Activated B cell treated with CpG ODN at 0.5 μM for 24 hours (primary cell): ENCODE measurements at regions of chr14 and their contacts with region 1.

Region 1: DNA sequence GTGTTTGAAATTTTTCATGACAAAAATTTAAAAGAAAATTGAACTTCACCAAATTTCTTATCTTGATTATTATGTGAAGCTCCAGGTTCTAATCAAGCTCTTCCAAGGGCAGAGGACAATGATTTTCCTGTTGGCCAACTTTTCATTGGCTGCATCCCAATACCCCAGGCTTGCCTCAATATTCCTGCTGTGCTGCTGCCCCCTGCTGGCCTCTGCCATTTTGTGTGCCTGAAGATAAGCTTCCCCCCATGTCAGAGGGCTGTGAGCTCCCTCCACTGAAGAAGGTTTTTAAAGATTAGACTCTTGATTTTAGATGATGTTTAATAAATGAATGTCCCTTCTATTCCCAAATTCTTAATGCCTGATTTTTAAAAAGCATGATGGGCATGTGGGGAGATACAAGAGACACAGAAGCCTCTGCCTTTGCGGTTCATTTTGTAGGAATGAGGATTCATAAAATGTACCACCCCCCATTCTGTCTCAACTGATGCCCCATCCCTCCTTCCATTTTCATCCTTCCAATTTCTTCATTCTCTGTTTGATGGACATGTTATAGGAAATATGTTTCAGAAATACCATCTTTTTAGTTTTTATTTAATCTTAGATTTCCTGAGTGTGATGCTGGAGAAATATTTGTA is 76.7 kb upstream of the RGS6 start:
- DNase-seq: peak; percentile 36
- ATAC-seq: no peak
- H3K4me3 Mint-ChIP-seq: no peak overlapping the region
- H3K27ac Mint-ChIP-seq: no peak overlapping the region
- H3K4me1 Mint-ChIP-seq: peaks cover 15% of the 10 kb centered on the region
- H3K27me3 Mint-ChIP-seq: peaks cover 13% of the 10 kb centered on the region
- CTCF ChIP-seq: no peak

Region 2: DNA sequence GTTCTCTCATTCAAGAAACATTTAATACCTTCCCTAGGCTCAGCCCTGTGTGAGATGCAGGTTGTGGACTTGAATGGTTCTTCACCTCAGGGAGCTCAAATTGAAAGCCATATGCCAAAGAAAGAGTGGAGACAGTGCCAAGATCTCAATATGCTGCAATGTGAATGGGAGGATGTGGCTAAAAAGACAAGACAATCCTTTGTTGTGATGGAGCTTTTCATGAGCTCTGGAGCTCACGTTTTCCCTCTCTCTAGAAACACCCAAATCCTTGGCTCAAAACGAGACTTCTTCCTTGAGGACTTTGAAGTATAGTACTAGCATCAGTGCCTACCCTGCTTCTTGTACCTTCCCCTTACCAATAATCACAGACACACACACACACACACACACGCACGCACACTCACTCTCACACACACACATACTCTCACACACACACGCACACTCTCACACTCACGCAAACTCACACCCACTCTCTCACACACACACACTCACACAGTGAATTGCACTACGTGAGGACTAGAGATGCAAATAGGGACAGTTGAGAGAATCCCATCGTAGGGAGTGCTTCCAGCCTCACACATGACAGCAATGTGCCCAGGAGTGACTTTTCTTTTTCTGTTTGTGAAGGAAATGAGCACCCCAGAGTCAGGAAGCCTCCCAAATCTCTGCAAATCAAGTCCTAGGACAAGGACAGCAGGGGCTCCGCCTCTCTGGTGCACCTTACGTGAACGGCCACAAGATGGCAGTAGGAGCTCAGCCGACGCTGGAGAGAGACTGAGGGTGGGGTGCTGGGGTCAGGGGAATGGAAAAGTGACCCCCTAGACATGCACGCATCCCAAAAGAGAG is 716.8 kb before region 1 on chr14:
- CTCF ChIA-PET with region 1: interaction called, 5 read pairs
- POLR2A ChIA-PET with region 1: no interaction called
- intact Hi-C with region 1: loop called (anchors 2 kb)
- DNase-seq: peak; percentile 42
- ATAC-seq: peak; percentile 84
- H3K4me3 Mint-ChIP-seq: no peak overlapping the region
- H3K27ac Mint-ChIP-seq: no peak overlapping the region
- H3K4me1 Mint-ChIP-seq: peaks cover 28% of the 10 kb centered on the region
- H3K27me3 Mint-ChIP-seq: no peaks in the 10 kb centered on the region
- CTCF ChIP-seq: peak; percentile 64